ENCODE measurements at regions of chr17 and their contacts with region 1.

Region 1: DNA sequence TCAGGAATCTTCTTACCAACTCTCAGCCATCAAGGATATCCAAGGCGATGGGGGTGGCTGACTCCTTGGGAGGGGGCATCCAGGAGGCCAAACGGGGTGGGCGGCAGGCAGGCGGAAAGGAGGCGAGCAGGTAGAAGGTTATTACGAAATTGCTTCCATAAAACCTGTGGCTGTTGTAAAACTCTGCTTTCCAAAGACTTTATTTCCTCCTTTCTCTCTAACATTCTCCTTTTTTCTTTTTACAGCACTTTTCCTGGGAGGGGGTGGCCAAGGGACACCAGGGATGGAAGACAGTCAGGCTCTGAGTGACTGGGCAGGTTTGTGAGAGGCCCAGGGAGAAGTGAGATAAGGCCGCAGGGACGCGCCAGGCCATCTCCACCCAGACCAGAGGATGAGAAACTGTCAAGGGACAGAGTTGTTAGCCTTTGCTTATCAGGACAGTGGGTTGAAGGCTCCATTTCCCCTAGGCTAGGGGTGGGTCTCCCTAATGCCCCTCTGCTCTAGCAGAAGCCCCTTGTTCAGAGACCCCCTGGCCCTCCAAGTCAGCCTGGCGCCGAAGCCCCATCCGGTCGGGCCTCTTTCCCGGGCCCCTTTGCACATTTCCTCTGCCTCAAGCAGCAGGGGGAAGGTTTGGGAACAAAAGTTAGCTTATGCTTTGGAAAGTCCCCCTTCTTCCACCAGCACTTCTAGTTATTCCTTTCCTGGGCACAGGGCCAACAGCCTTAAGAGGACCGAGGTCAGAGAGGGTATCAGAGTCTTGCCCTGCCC is 5.0 kb upstream of the HOXB9 start:
- DNase-seq: no peak
- H3K4me3 ChIP-seq: no peak overlapping the region
- H3K27ac ChIP-seq: peak overlapping the region in 1 of 2 experiments; percentile 76
- H3K4me1 ChIP-seq: peaks cover 0 to 18% (median 14%) of the 10 kb centered on the region in 4 experiments
- H3K27me3 ChIP-seq: peaks cover 21 to 98% (median 60%) of the 10 kb centered on the region in 5 experiments

Region 2: DNA sequence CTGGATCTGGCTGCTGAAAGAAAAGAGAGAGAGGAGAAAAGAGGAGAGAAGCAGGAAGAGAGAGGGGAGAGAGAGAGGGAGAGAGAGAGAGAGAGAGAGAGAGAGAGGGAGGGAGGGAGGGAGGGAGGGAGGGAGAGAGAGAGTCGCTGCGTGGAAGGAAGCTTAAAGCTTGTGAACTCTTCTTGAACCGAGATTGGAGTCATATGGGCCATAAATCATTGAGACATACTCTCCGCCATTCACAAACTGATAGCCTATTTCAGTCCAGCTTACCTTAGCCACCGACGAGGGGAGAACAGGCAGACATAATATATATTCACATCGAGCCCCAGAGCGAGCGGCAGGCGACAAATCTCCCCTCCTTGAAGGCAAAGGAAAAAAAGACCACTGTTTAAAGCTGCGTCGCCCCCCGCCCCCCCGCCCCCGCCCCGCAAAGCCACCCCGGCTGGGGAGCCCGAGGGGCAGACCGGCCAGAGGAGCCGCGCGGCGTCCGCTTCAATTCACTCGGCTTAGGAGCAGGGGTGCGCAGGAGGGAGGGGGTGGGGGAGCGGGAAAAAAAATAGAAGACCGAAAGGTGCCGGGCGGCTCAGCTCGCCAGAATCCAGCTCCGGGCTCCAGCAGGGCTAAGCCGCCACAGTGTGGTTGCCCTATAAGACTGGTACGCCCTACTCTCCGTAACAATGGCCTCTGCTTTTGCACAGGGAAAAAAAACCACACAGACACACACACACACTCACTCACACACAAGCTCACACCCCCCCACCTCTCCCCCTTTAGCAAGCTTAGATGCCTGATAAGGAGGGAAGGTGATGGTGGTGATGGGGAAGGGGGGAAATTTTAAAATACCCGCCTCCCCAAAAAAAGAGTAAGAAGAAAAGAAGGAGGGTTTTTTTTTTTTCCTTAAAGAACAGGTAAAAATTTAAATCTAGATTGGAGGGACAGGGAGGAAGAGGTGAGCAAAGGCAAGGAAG is 75.6 kb before region 1 on chr17:
- CTCF ChIA-PET with region 1: no interaction called
- POLR2A ChIA-PET with region 1: no interaction called
- DNase-seq: peak; percentile 81 to 95 (median 92)
- H3K4me3 ChIP-seq: peak overlapping the region in 5 of 7 experiments; percentile 29 to 63 (median 59)
- H3K27ac ChIP-seq: peak overlapping the region in 1 of 2 experiments; percentile 64
- H3K4me1 ChIP-seq: peaks cover 3 to 47% (median 33%) of the 10 kb centered on the region in 4 experiments
- H3K27me3 ChIP-seq: no peaks in the 10 kb centered on the region

Region 3: DNA sequence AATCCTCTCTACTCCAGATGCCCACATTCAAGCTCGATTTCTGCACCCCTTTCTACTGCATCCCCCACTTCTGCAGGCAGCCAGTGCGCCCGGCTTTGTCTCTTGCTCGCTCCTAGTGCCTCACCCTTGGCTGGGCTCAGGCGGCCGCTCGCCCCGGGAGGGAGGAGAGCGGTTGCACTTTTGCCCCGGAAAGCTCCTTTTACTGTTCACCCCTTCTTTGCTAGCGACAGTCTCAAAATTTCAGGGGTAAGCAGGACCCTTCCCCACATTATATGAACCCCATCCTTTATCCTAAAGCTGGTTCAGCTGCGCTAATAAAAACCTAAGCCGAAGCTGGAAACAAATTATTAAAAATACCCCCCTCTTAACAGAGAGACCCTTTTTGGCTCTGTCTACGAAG is 38.5 kb before region 1 on chr17:
- CTCF ChIA-PET with region 1: no interaction called
- POLR2A ChIA-PET with region 1: no interaction called
- DNase-seq: peak in 1 of 3 donors; percentile 50
- H3K4me3 ChIP-seq: peak overlapping the region; percentile 27 to 97 (median 75)
- H3K27ac ChIP-seq: peak overlapping the region in 1 of 2 experiments; percentile 61
- H3K4me1 ChIP-seq: peaks cover 10 to 84% (median 64%) of the 10 kb centered on the region in 4 experiments
- H3K27me3 ChIP-seq: peaks cover 0 to 23% (median 0%) of the 10 kb centered on the region in 5 experiments

Region 4: GRCh38 chr17:48619826-48620449 is 11.2 kb before region 1 on chr17:
- CTCF ChIA-PET with region 1: interaction called, 27 read pairs
- POLR2A ChIA-PET with region 1: no interaction called
- DNase-seq: no peak
- H3K4me3 ChIP-seq: no peak overlapping the region
- H3K27ac ChIP-seq: no peak overlapping the region
- H3K4me1 ChIP-seq: peaks cover 0 to 29% (median 23%) of the 10 kb centered on the region in 4 experiments
- H3K27me3 ChIP-seq: peaks cover 14 to 100% (median 61%) of the 10 kb centered on the region in 5 experiments

Region 5: DNA sequence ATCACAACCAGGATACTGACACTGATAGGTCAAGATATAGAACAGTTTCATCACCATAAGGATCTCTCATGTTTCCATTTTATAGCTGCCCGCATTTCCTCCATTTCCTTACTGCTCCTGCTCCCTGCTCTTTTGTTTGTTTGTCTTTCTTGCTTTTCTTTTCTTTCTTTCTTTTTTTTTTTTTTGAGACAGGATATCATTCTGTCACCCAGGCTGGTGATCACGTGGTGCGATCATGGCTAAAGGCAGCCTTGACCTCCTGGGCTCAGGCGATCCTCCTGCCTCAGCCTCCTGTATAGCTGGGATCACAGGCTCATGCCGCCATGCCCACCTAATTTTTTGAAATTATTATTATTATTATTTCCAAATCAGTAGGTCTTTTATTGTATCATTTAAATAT is 59.5 kb after region 1 on chr17:
- CTCF ChIA-PET with region 1: no interaction called
- POLR2A ChIA-PET with region 1: no interaction called
- DNase-seq: no peak
- H3K4me3 ChIP-seq: no peak overlapping the region
- H3K27ac ChIP-seq: no peak overlapping the region
- H3K4me1 ChIP-seq: no peaks in the 10 kb centered on the region
- H3K27me3 ChIP-seq: peaks cover 2 to 38% (median 13%) of the 10 kb centered on the region in 5 experiments

Region 6: DNA sequence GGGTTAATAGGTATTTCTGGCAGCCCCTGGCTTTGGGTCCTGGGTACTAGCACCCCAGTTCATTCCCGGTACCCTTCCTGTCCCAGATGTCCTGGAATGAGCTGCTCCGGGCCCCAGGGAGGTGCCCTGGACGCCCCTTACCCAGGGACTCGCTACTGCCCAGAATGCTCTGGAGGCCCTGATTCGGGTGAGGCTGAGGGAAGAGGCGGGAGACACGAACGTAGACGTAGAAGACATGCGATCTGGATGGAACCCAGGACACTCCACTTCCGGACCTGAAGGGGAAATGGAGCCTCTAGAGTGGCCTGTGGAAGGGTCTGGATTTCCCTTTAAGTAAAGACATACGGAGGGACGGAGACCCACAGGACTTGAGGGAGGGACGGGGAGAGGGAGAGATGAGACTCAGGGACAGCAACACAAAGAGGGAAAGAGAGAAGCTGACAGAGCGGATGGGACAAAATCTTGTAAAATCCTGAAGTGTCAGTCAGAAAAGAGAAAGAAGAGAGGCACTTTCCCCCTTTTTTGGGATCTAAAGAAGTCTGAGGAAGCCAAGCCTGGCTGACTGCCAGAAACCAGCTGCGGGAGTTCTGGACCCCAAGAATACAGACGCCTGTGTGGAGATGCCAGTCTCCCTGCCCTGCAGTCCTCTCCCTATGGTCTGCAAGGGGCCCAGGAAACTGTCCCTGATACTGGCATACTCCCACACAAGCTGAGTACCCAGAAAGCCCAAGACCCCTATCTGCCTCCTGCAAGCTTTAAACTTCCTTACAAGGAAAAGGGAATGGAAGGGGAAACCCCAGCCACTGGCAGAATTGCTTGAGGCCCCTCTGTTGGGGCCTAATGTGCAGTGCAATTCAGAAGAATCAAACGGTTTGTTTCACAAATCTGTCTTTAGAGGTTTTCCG is 98.5 kb after region 1 on chr17:
- CTCF ChIA-PET with region 1: no interaction called
- POLR2A ChIA-PET with region 1: no interaction called
- DNase-seq: no peak
- H3K4me3 ChIP-seq: no peak overlapping the region
- H3K27ac ChIP-seq: no peak overlapping the region
- H3K4me1 ChIP-seq: peaks cover 0 to 19% (median 6%) of the 10 kb centered on the region in 4 experiments
- H3K27me3 ChIP-seq: peaks cover 37 to 100% (median 73%) of the 10 kb centered on the region in 5 experiments